ENCODE measurements at regions of chr9 and their contacts with region 1.

Region 1: DNA sequence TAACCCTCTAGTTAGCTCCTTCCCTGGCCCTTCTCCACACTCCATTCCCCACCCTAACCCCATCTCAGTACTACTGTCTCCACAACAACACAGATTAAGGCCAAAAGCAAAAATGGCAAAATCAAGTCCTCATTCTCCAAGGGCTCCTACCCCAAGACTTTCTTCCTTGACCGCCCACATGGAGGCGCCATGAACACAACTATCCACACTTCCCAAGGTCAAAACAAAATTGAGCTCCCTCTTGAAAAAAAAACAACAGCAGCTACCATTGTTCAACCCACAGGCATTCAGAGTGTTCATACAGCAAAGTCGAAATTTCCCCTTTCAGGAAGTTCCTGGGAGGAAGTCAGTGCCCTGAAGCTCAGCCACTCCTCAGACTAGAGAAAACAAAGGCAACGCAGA is 54.4 kb downstream of the GNAQ start:
- DNase-seq: peak; percentile 73
- ATAC-seq: peak; percentile 8
- H3K4me3 Mint-ChIP-seq: no peak overlapping the region
- H3K27ac Mint-ChIP-seq: peak overlapping the region; percentile 88
- H3K4me1 Mint-ChIP-seq: peaks cover 62% of the 10 kb centered on the region
- H3K27me3 Mint-ChIP-seq: no peaks in the 10 kb centered on the region

Region 2: GRCh38 chr9:77807281-77807683 is 169.9 kb before region 1 on chr9:
- CTCF ChIA-PET with region 1: no interaction called
- POLR2A ChIA-PET with region 1: no interaction called
- intact Hi-C with region 1: no loop called
- DNase-seq: no peak
- ATAC-seq: peak; percentile 89
- H3K4me3 Mint-ChIP-seq: no peak overlapping the region
- H3K27ac Mint-ChIP-seq: peak overlapping the region; percentile 55
- H3K4me1 Mint-ChIP-seq: peaks cover 39% of the 10 kb centered on the region
- H3K27me3 Mint-ChIP-seq: no peaks in the 10 kb centered on the region

Region 3: DNA sequence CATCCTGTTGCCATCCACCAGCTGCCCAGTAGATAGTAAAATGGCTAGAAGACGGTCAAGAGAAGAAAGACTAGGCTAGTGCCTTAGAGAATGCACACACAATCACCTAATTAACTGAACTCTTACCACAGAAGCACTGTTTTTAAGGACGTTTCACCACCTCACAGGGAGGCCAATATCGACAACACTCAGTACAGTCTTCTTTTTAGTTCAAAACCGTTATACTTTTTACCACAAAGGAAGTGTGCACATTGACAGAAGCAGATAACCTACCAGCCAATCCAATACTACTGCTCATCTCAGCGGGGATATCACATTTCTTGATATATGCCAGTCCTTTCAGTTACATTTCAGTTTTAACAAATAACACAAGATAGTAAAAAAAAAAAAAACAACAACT is 67.9 kb before region 1 on chr9:
- CTCF ChIA-PET with region 1: no interaction called
- POLR2A ChIA-PET with region 1: no interaction called
- intact Hi-C with region 1: no loop called
- DNase-seq: no peak
- ATAC-seq: peak; percentile 97
- H3K4me3 Mint-ChIP-seq: peak overlapping the region; percentile 4
- H3K27ac Mint-ChIP-seq: peak overlapping the region; percentile 69
- H3K4me1 Mint-ChIP-seq: peaks cover 45% of the 10 kb centered on the region
- H3K27me3 Mint-ChIP-seq: no peaks in the 10 kb centered on the region

Region 4: DNA sequence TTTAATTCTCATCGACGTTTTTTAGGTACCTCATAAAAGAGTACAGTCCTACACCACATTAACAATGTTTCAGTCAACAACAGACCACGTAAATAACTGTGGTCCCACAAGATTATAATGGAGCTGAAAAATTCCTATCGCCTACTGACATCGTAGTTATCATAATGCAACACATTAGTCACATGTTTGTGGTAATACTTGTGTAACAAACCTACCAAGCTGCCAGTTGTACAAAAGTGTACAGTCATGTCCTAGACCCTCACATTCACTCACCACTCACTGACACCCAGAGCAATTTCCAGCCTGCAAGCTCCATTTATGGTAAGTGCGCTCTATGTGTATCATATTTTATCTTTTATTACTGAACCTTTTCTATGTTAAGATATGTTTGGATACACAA is 37.6 kb after region 1 on chr9:
- CTCF ChIA-PET with region 1: interaction called, 4 read pairs
- POLR2A ChIA-PET with region 1: no interaction called
- intact Hi-C with region 1: loop called in 1 of 2 experiments (anchors 5 kb)
- DNase-seq: no peak
- ATAC-seq: no peak
- H3K4me3 Mint-ChIP-seq: no peak overlapping the region
- H3K27ac Mint-ChIP-seq: no peak overlapping the region
- H3K4me1 Mint-ChIP-seq: peaks cover 50% of the 10 kb centered on the region
- H3K27me3 Mint-ChIP-seq: no peaks in the 10 kb centered on the region

Region 5: DNA sequence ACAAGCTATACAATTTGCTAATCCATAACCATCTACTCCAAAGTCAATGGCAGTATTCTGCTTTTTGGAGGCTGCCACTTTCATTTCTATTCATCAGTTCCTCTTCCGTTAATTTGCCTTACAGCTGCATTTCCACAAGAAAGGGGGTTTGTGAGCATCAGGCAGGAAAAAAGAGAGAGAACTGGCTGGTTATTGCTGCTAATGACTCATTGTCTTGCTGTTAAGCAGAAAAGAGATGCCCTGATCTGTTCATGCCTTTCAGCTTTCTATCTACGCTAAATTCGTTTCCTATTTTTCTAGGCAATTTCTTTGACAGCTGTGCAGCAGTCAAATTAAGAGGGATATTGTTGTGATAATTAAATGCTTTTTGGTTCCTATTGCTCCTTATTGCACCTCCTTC is 120.3 kb after region 1 on chr9:
- CTCF ChIA-PET with region 1: interaction called, 3 read pairs
- POLR2A ChIA-PET with region 1: interaction called, 11 read pairs
- intact Hi-C with region 1: no loop called
- DNase-seq: no peak
- ATAC-seq: no peak
- H3K4me3 Mint-ChIP-seq: no peak overlapping the region
- H3K27ac Mint-ChIP-seq: no peak overlapping the region
- H3K4me1 Mint-ChIP-seq: peaks cover 8% of the 10 kb centered on the region
- H3K27me3 Mint-ChIP-seq: no peaks in the 10 kb centered on the region

Region 6: GRCh38 chr9:78121488-78121887 is 144.3 kb after region 1 on chr9:
- CTCF ChIA-PET with region 1: interaction called, 5 read pairs
- POLR2A ChIA-PET with region 1: no interaction called
- intact Hi-C with region 1: loop called (anchors 1 to 5 kb)
- DNase-seq: peak; percentile 79
- ATAC-seq: no peak
- H3K4me3 Mint-ChIP-seq: no peak overlapping the region
- H3K27ac Mint-ChIP-seq: no peak overlapping the region
- H3K4me1 Mint-ChIP-seq: peaks cover 37% of the 10 kb centered on the region
- H3K27me3 Mint-ChIP-seq: no peaks in the 10 kb centered on the region

Region 7: GRCh38 chr9:78213712-78214111 is 236.5 kb after region 1 on chr9:
- CTCF ChIA-PET with region 1: interaction called, 3 read pairs
- POLR2A ChIA-PET with region 1: no interaction called
- intact Hi-C with region 1: loop called in 1 of 2 experiments (anchors 5 kb)
- DNase-seq: no peak
- ATAC-seq: peak; percentile 55
- H3K4me3 Mint-ChIP-seq: no peak overlapping the region
- H3K27ac Mint-ChIP-seq: no peak overlapping the region
- H3K4me1 Mint-ChIP-seq: peaks cover 37% of the 10 kb centered on the region
- H3K27me3 Mint-ChIP-seq: no peaks in the 10 kb centered on the region

Region 8: GRCh38 chr9:78235756-78236538 is 258.7 kb after region 1 on chr9 and contains the start of gene CEP78:
- CTCF ChIA-PET with region 1: no interaction called
- POLR2A ChIA-PET with region 1: no interaction called
- intact Hi-C with region 1: loop called in 1 of 2 experiments (anchors 2 kb)
- DNase-seq: peak; percentile 94
- ATAC-seq: peak; percentile 98
- H3K4me3 Mint-ChIP-seq: no peak within 1 kb of the TSS
- H3K27ac Mint-ChIP-seq: peak within 1 kb of the TSS; percentile 93
- H3K4me1 Mint-ChIP-seq: peaks cover 30% of the 10 kb centered on the region
- H3K27me3 Mint-ChIP-seq: no peaks in the 10 kb centered on the region
- total RNA-seq, gene CEP78: 35.0 to 39.2 TPM

Region 9: GRCh38 chr9:78325343-78325742 is 348.1 kb after region 1 on chr9:
- CTCF ChIA-PET with region 1: no interaction called
- POLR2A ChIA-PET with region 1: no interaction called
- intact Hi-C with region 1: no loop called
- DNase-seq: no peak
- ATAC-seq: no peak
- H3K4me3 Mint-ChIP-seq: no peak overlapping the region
- H3K27ac Mint-ChIP-seq: no peak overlapping the region
- H3K4me1 Mint-ChIP-seq: no peaks in the 10 kb centered on the region
- H3K27me3 Mint-ChIP-seq: no peaks in the 10 kb centered on the region